H1 (cell line): ENCODE measurements at regions of chr1 and their contacts with region 1.

Region 1: GRCh38 chr1:24150234-24151174 is 7.6 kb upstream of the IL22RA1 start:
- DNase-seq: peak; percentile 91 to 100
- H3K4me3 ChIP-seq: peak overlapping the region; percentile 19 to 58 (median 34); a peak in 6 of 8 replicates
- H3K27ac ChIP-seq: peak overlapping the region; percentile 97
- H3K4me1 ChIP-seq: peaks cover 3 to 23% (median 15%) of the 10 kb centered on the region in 4 experiments
- H3K27me3 ChIP-seq: no peaks in the 10 kb centered on the region
- CTCF ChIP-seq: peak; percentile 83 to 89 (median 88)
- EP300 ChIP-seq: no peak
- POLR2A ChIP-seq: peak; percentile 76 to 91
- RAD21 ChIP-seq: peak; percentile 55 to 70; a peak in 3 of 4 replicates

Region 2: GRCh38 chr1:23979878-23980724 is 170.4 kb before region 1 on chr1 and contains the start of gene SRSF10:
- CTCF ChIA-PET with region 1: interaction called, 4 read pairs
- POLR2A ChIA-PET with region 1: interaction called, 14 read pairs
- DNase-seq: peak; percentile 93 to 99
- H3K4me3 ChIP-seq: peak within 1 kb of the TSS; percentile 68 to 95 (median 90)
- H3K27ac ChIP-seq: peak within 1 kb of the TSS; percentile 99
- H3K4me1 ChIP-seq: peaks cover 4 to 10% (median 6%) of the 10 kb centered on the region in 4 experiments
- H3K27me3 ChIP-seq: no peaks in the 10 kb centered on the region
- CTCF ChIP-seq: peak in 1 of 3 experiments; percentile 28; a peak in 2 of 4 replicates
- EP300 ChIP-seq: no peak
- POLR2A ChIP-seq: peak; percentile 98 to 99
- RAD21 ChIP-seq: no peak
- total RNA-seq, gene SRSF10: 194 TPM in 2 replicates

Region 3: DNA sequence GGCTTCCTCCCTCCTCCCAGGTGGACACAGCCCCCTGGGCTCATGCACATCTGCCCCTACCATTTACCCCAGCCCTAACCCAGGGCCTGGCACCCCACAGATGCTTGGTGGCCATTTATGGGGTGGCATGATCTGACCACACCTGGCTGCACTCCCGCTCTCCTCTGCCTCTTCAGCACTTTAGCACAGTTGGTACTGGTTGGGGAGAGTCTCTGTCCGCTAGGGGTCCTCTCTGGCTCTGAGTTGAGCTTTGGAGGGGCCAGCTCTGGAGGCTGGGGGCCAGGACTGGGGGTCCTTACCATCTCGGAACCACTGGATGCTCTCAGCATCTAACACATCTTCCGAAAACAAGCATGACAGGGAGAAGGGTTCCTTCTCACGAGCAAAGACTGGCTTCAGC is 56.0 kb before region 1 on chr1:
- CTCF ChIA-PET with region 1: interaction called, 10 read pairs
- POLR2A ChIA-PET with region 1: interaction called, 13 read pairs
- DNase-seq: peak in 1 of 2 experiments; percentile 63
- H3K4me3 ChIP-seq: no peak overlapping the region
- H3K27ac ChIP-seq: no peak overlapping the region
- H3K4me1 ChIP-seq: peaks cover 0 to 6% (median 2%) of the 10 kb centered on the region in 4 experiments; a peak in 3 of 7 replicates
- H3K27me3 ChIP-seq: no peaks in the 10 kb centered on the region
- CTCF ChIP-seq: peak; percentile 48 to 57 (median 48)
- EP300 ChIP-seq: no peak
- POLR2A ChIP-seq: no peak
- RAD21 ChIP-seq: peak; percentile 32 to 53; a peak in 3 of 4 replicates

Region 4: DNA sequence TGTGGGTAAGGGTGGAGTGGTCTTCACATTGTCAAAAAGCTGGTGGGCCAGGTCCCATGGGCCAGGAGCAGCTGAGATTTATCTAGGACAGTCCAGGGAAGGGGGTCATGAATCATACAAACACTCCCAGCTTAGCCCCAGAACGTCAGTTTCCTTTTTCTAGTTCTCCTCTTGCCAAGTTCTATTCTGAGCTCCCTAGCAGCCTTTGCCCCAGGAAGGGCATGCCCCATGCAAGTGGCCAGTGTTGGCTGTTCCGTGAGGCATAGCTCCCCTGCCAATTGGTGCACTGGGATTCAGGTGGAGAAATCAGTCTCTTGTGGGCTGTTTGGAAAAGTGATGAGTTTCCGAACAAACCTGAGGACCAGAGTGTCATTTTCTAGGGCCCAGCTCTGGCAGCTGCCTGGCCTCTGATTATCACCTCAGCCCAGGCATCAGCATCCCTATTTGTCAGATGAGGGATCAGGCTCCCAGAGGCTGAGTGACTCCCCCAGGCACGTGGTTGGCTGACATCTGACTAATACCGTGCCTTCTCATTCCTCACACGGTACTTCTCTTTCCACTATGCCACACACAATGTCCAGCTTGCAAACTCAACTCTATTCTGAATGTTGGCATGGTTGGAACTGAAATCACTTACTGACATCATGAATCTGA is 24.4 kb before region 1 on chr1:
- CTCF ChIA-PET with region 1: interaction called, 8 read pairs
- POLR2A ChIA-PET with region 1: interaction called, 19 read pairs
- DNase-seq: no peak
- H3K4me3 ChIP-seq: no peak overlapping the region
- H3K27ac ChIP-seq: no peak overlapping the region
- H3K4me1 ChIP-seq: peaks cover 0 to 3% (median 0%) of the 10 kb centered on the region in 4 experiments; a peak in 2 of 7 replicates
- H3K27me3 ChIP-seq: no peaks in the 10 kb centered on the region; a peak in 3 of 7 replicates
- CTCF ChIP-seq: no peak
- EP300 ChIP-seq: no peak
- POLR2A ChIP-seq: no peak
- RAD21 ChIP-seq: no peak

Region 5: GRCh38 chr1:24167008-24167407 is 16.5 kb after region 1 on chr1:
- CTCF ChIA-PET with region 1: interaction called, 42 read pairs
- POLR2A ChIA-PET with region 1: interaction called, 51 read pairs
- DNase-seq: no peak
- H3K4me3 ChIP-seq: no peak overlapping the region
- H3K27ac ChIP-seq: no peak overlapping the region
- H3K4me1 ChIP-seq: no peaks in the 10 kb centered on the region
- H3K27me3 ChIP-seq: no peaks in the 10 kb centered on the region
- CTCF ChIP-seq: no peak
- EP300 ChIP-seq: no peak
- POLR2A ChIP-seq: no peak
- RAD21 ChIP-seq: no peak

Region 6: GRCh38 chr1:24181619-24182018 is 31.1 kb after region 1 on chr1:
- CTCF ChIA-PET with region 1: interaction called, 18 read pairs
- POLR2A ChIA-PET with region 1: interaction called, 82 read pairs
- DNase-seq: no peak
- H3K4me3 ChIP-seq: no peak overlapping the region
- H3K27ac ChIP-seq: no peak overlapping the region
- H3K4me1 ChIP-seq: peaks cover 0 to 2% (median 0%) of the 10 kb centered on the region in 4 experiments; a peak in 2 of 7 replicates
- H3K27me3 ChIP-seq: no peaks in the 10 kb centered on the region; a peak in 1 of 7 replicates
- CTCF ChIP-seq: no peak
- EP300 ChIP-seq: no peak
- POLR2A ChIP-seq: no peak
- RAD21 ChIP-seq: no peak

Region 7: DNA sequence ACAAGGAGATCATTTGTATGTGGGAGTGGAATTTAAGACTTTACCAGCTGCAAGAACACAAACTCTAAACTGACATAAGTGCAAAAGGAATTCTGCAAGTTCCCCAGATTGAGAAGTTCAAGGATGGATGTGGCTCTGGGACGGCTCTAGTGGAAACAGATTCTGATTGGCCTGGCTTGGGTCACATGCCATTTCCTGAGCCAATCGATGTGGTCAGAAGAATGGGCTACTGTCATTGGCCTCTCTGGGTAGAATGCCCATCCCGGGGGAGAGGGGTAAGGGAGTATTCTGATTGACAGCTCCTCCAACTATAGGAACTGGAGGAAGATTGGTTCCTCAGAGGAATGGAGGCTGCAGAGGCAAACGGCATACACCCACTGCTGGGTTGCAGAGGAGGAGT is 42.5 kb after region 1 on chr1:
- CTCF ChIA-PET with region 1: interaction called, 85 read pairs
- POLR2A ChIA-PET with region 1: interaction called, 82 read pairs
- DNase-seq: no peak
- H3K4me3 ChIP-seq: no peak overlapping the region
- H3K27ac ChIP-seq: no peak overlapping the region
- H3K4me1 ChIP-seq: no peaks in the 10 kb centered on the region
- H3K27me3 ChIP-seq: no peaks in the 10 kb centered on the region; a peak in 1 of 7 replicates
- CTCF ChIP-seq: no peak
- EP300 ChIP-seq: no peak
- POLR2A ChIP-seq: no peak
- RAD21 ChIP-seq: no peak

Region 8: DNA sequence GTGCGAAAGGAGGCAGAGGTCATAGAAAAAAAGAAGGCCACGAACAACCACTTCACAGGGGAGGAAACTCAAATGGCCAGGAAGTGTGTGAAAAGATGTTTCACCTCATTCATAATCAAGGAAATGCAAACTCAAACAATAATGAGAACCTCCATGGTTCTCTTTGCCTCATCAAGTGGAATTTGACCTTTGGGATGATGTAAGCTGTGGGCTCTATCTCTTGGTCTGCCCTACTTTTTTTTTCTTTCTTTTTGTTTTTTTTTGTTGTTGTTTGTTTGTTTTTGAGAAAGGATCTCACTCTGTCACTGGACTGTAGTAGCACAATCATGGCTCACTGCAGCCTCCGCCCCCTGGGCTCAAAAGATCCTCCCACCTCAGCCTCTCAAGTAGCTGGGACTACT is 112.7 kb after region 1 on chr1:
- CTCF ChIA-PET with region 1: no interaction called
- POLR2A ChIA-PET with region 1: no interaction called
- DNase-seq: no peak
- H3K4me3 ChIP-seq: no peak overlapping the region
- H3K27ac ChIP-seq: no peak overlapping the region
- H3K4me1 ChIP-seq: no peaks in the 10 kb centered on the region
- H3K27me3 ChIP-seq: no peaks in the 10 kb centered on the region
- CTCF ChIP-seq: no peak
- EP300 ChIP-seq: no peak
- POLR2A ChIP-seq: no peak
- RAD21 ChIP-seq: no peak

Region 9: DNA sequence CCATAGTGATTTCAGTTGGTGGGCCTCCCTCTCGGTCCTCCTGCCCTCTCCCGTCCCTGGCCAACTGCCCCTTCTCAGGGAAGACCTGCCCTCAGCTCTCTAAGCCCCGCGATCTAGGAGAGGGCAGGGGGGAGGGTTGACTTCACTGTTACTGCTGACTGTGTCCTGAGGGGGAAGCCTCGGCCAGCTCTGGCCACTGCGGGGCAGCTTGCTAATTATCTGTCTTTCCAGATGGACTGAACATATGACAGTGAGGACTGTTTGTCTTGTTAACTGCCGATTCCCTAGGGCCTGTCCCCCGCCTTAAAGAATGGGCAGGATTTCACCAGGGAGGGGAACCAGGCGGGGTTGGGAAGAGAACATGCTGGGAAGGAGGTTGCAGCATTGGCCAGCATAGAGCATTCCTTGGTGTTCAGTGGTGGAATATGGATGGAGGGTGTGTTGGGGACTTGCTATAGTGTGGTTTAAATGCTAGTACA is 288.0 kb after region 1 on chr1:
- CTCF ChIA-PET with region 1: no interaction called
- POLR2A ChIA-PET with region 1: no interaction called
- DNase-seq: no peak
- H3K4me3 ChIP-seq: no peak overlapping the region
- H3K27ac ChIP-seq: no peak overlapping the region
- H3K4me1 ChIP-seq: peaks cover 3 to 12% (median 5%) of the 10 kb centered on the region in 4 experiments
- H3K27me3 ChIP-seq: no peaks in the 10 kb centered on the region
- CTCF ChIP-seq: no peak
- EP300 ChIP-seq: no peak
- POLR2A ChIP-seq: no peak
- RAD21 ChIP-seq: no peak

Region 10: GRCh38 chr1:24463776-24464735 is 313.6 kb after region 1 on chr1:
- CTCF ChIA-PET with region 1: no interaction called
- POLR2A ChIA-PET with region 1: no interaction called
- DNase-seq: peak; percentile 59 to 65
- H3K4me3 ChIP-seq: peak overlapping the region; percentile 7 to 52 (median 24); a peak in 6 of 8 replicates
- H3K27ac ChIP-seq: no peak overlapping the region; the same call in 1 of the 2 replicates
- H3K4me1 ChIP-seq: peaks cover 11 to 22% (median 17%) of the 10 kb centered on the region in 4 experiments; a peak in 6 of 7 replicates
- H3K27me3 ChIP-seq: no peaks in the 10 kb centered on the region
- CTCF ChIP-seq: no peak
- EP300 ChIP-seq: no peak
- POLR2A ChIP-seq: no peak
- RAD21 ChIP-seq: no peak